Pancreas (tissue), 10 donors: ENCODE measurements at regions of chr1 and their contacts with region 1.

Region 1: GRCh38 chr1:19385869-19386591 is 73.9 kb downstream of the SLC66A1 start:
- DNase-seq: peak in 4 of 6 donors; percentile 34 to 71 (median 39)
- ATAC-seq: peak; percentile 74 to 89 (median 81)
- H3K4me3 ChIP-seq: no peak overlapping the region
- H3K27ac ChIP-seq: peak overlapping the region in 2 of 4 donors; percentile 23 to 56
- H3K4me1 ChIP-seq: peaks cover 4 to 11% (median 9%) of the 10 kb centered on the region in 3 donors
- H3K27me3 ChIP-seq: no peaks in the 10 kb centered on the region
- CTCF ChIP-seq: no peak

Region 2: GRCh38 chr1:19644681-19645410 is 258.8 kb after region 1 on chr1:
- intact Hi-C with region 1: loop called in 2 of 3 experiments (anchors 5 kb)
- DNase-seq: peak in 2 of 6 donors; percentile 68 to 70
- ATAC-seq: peak in 3 of 4 donors; percentile 12 to 36 (median 32)
- H3K4me3 ChIP-seq: peak overlapping the region in 3 of 4 donors; percentile 43 to 59 (median 47)
- H3K27ac ChIP-seq: peak overlapping the region; percentile 13 to 48 (median 42)
- H3K4me1 ChIP-seq: no peaks in the 10 kb centered on the region
- H3K27me3 ChIP-seq: no peaks in the 10 kb centered on the region
- CTCF ChIP-seq: no peak